Calu3 (cell line): ENCODE measurements at regions of chr10 and their contacts with region 1.

Region 1: DNA sequence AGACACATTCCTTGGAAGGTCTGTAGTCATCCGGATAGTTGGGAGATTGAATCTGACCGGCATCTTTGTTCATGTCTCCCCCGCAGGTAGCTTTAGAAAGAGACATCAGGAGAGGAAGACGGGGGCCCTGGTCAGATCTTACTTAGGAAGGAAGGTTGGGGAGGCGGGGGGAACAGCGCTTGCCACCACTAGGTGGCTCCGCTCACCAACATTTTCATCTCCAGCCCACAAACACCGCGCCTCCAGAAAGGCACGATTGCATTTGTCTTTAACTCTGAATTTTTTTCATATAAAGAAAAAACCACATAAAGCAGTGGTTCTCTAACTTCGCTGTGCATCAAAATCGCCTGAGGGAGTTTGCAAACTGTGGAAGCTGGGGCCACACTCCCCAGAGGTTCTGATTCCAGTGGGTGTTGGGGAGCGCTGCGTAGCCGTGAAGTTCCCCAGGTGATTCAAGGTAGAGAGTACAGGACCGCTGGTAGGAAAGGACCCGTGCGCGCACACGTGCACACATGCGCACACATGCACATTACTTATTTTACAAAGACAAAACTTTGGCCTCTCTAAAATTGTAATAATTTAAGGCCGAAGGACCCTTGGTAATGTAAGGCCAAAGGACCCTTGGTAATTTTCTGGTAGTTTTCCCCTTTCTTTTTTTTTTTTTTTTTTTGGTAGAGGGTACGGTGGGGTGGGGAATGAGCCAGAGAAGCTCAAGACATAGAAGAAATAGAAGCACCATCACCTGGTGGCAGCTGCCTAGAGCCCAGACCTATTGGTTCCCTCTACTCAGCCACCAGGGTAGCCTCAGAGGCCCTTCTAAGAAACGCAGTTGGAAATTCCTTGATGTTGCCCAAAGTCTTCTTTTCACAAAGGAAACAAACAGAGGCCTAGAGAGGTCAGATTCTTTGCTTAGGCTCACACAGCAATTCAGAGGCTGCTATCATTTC is 37.4 kb upstream of the OPALIN start:
- DNase-seq: peak; percentile 47
- H3K4me3 Mint-ChIP-seq: no peak overlapping the region
- H3K27ac Mint-ChIP-seq: no peak overlapping the region
- H3K4me1 Mint-ChIP-seq: no peaks in the 10 kb centered on the region
- H3K27me3 Mint-ChIP-seq: peaks cover 51% of the 10 kb centered on the region
- CTCF ChIP-seq: peak; percentile 59

Region 2: DNA sequence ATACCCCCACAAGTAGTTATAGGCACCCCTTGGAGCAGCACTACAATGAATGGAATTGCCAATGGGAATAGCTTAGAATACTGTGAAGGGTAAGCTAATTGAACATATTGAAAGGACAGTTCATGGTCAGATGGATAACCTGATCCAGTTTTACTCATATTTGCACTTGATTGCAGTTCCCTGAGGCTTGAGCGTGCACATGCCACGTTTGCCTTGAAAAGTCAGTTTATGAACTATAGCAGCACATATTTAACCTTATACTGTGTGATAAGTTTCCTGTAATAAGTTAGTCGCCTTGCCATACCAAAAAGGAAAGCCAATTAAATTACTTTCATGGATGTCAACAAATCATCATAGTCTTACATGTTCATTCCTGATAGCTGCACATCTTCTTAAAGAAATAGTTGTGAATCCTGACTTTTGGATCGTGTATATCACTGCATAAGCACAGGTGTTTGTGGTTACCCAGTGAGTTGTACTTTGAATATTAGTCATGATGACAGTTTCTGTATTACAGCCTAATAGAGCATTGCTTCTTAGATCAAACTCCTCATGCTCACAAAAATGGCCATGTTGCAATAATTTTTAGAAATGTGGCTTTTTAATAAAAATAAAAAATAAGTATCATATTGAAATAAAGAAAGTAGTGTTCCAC is 70.4 kb before region 1 on chr10:
- CTCF ChIA-PET with region 1: no interaction called
- intact Hi-C with region 1: no loop called
- DNase-seq: no peak
- H3K4me3 Mint-ChIP-seq: no peak overlapping the region
- H3K27ac Mint-ChIP-seq: no peak overlapping the region
- H3K4me1 Mint-ChIP-seq: no peaks in the 10 kb centered on the region
- H3K27me3 Mint-ChIP-seq: peaks cover 58% of the 10 kb centered on the region
- CTCF ChIP-seq: no peak

Region 3: DNA sequence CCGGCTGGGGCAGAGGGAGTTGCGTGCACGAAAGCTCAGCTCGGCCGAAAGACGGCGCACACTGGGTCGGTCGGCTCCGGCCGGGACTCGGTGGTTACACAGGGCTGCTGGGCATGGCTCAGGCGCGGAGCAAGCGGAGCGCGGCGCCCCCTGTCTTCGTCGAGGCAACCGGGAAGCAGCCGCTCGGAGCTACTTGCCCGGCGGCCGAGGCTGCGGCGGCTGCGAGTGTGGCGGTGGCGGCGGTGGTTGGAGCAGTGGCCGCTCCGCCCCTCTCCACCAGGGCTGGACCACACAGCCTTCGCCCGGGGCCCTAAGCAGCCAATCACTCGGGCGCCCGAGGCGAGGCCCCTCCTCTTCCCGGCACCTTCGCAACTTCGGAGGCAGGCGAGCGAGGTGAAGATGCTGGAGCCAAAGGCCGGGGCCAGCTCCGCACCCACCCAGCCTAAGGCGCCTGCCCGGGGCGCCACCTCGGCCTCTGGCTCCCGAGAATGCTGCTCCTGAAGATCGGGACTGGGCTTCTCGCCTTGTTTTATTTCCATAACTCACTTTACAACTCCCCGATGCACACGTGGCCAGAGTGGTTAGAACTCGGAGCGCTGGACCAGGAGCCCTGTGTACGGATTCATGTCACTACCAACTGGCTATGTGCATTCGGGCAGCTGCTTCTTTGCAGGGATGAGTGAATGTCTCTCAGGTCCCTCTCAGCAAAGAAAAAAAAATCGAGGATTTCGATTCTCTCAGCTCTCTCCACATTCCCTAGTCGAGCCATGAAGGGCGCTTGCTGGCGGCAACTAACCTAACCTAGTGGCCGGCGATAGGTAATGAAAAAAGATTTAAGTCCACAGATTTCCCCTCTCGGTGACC is 117.7 kb after region 1 on chr10 and contains the start of gene TLL2:
- CTCF ChIA-PET with region 1: no interaction called
- intact Hi-C with region 1: loop called (anchors 5 kb)
- DNase-seq: peak; percentile 89
- H3K4me3 Mint-ChIP-seq: peak within 1 kb of the TSS; percentile 78
- H3K27ac Mint-ChIP-seq: no peak within 1 kb of the TSS
- H3K4me1 Mint-ChIP-seq: no peaks in the 10 kb centered on the region
- H3K27me3 Mint-ChIP-seq: peaks cover 16% of the 10 kb centered on the region
- CTCF ChIP-seq: peak; percentile 7
- total RNA-seq, gene TLL2: 0.44 and 0.66 TPM in 2 replicates